ENCODE measurements at regions of chr7 and their contacts with region 1.

Region 1: DNA sequence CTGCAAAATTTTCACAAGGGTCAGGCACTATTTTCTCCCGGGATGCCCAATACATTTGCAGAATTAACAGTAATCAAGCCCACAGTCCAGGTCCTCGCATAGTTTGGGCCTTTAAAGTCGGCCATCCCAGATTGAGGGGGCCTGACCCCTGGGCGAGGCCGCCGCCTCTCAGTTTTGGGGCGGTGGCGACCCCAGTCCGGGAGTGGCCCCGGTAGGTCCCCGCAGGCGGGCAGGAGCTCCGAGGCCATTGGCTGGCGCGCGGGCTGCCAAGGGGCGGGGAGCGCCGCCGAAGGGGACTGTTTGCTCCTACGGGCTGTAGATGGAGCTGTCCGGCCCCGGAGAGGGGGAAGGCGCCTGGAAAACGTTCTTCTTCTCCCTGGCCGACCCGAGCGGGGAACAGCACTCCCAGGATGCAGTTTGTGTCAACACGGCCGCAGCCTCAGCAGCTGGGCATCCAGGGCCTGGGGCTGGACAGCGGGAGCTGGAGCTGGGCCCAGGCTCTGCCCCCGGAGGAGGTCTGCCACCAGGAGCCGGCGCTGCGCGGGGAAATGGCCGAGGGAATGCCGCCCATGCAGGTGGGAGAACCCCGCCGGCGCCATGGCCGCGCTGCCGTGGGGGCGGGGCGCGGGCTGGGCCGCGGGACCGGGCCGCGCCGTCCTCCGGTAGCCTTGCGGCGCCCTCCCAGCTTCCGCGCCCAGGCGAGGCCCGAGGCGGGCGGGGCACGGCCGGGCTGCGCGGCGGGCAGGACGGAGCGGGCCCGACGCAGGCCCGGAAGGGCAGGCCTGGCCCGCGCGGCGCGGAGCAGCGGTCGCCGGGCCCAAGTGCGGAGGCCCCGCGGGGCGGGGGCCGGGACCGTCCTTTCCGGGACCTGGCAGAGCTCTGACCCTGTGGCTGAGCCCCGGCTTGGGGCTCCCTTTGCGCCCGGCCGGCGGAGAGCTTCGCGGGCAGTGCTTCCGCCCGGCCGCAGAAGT is at the start of gene ZNF282:
- DNase-seq: peak; percentile 84
- ATAC-seq: peak; percentile 94
- H3K4me3 Mint-ChIP-seq: peak within 1 kb of the TSS; percentile 92
- H3K27ac Mint-ChIP-seq: peak within 1 kb of the TSS; percentile 92
- H3K4me1 Mint-ChIP-seq: peaks cover 45% of the 10 kb centered on the region
- H3K27me3 Mint-ChIP-seq: no peaks in the 10 kb centered on the region
- CTCF ChIP-seq: peak; percentile 65
- total RNA-seq, gene ZNF282: 29.3 to 29.7 TPM

Region 2: GRCh38 chr7:149147072-149147751 is 48.3 kb before region 1 on chr7 and contains the start of gene ZNF398:
- CTCF ChIA-PET with region 1: interaction called, 15 read pairs
- POLR2A ChIA-PET with region 1: interaction called, 3 read pairs
- intact Hi-C with region 1: no loop called
- DNase-seq: peak; percentile 75
- ATAC-seq: peak; percentile 86
- H3K4me3 Mint-ChIP-seq: peak within 1 kb of the TSS; percentile 97
- H3K27ac Mint-ChIP-seq: peak within 1 kb of the TSS; percentile 95
- H3K4me1 Mint-ChIP-seq: peaks cover 28% of the 10 kb centered on the region
- H3K27me3 Mint-ChIP-seq: no peaks in the 10 kb centered on the region
- CTCF ChIP-seq: peak; percentile 87
- total RNA-seq, gene ZNF398: 7.2 to 8.7 TPM

Region 3: DNA sequence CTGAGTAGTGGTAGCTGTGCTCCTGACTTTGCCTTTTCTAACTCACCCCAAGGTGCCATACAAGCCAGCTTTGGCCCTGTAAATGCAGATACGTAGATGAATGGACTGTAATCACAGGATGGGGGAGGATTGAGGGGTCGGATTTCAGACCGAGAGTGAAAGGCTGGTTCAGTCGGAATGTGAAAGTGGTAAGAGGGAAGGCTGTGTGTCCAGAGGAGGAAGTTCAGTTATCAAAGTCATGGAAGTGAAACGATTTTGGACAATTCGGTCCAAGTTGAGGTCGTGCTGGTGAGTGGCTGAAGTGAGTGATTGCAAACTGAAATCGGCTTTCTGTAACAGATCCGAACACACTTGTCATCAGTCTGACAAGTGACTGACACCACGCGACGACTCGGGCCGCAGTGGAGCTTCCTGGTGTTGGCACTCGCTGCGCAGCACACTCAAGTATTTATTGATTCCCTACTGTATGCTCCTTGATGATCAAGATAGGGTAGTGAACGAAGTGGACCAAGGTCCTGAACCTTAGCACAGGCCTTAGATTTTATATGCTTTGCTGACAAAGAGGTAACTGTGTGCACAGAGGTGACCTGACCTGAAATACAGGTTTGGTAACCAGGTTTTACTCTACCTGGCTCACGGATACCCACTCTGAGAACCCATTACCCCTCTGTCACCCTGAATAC is 10.4 kb after region 1 on chr7:
- CTCF ChIA-PET with region 1: interaction called, 8 read pairs
- POLR2A ChIA-PET with region 1: interaction called, 10 read pairs
- intact Hi-C with region 1: no loop called
- DNase-seq: no peak
- ATAC-seq: no peak
- H3K4me3 Mint-ChIP-seq: no peak overlapping the region
- H3K27ac Mint-ChIP-seq: no peak overlapping the region
- H3K4me1 Mint-ChIP-seq: peaks cover 32% of the 10 kb centered on the region
- H3K27me3 Mint-ChIP-seq: no peaks in the 10 kb centered on the region
- CTCF ChIP-seq: no peak

Region 4: GRCh38 chr7:149284850-149285626 is 89.6 kb after region 1 on chr7:
- CTCF ChIA-PET with region 1: interaction called, 11 read pairs
- POLR2A ChIA-PET with region 1: interaction called, 3 read pairs
- intact Hi-C with region 1: no loop called
- DNase-seq: peak; percentile 98
- ATAC-seq: peak; percentile 98
- H3K4me3 Mint-ChIP-seq: peak overlapping the region; percentile 86
- H3K27ac Mint-ChIP-seq: peak overlapping the region; percentile 80
- H3K4me1 Mint-ChIP-seq: peaks cover 32% of the 10 kb centered on the region
- H3K27me3 Mint-ChIP-seq: no peaks in the 10 kb centered on the region
- CTCF ChIP-seq: no peak

Region 5: DNA sequence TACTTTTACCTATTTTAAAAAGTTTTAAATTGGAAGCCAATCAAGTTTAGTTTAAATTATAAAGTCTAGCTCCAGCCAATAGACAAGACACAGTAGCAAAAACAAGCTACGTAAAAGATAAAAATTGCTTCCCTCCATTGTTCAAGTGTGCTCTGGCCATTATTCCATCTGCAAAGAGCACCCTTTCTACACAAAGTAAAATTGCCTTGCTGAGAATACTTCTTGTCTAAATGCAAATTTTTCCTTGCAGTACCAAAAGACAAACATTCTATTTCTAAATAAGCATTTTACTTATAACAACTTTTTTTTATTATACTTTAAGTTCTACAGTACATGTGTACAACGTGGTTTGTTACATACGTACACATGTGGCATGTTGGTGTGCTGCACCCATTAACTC is 378.1 kb after region 1 on chr7:
- CTCF ChIA-PET with region 1: no interaction called
- POLR2A ChIA-PET with region 1: no interaction called
- intact Hi-C with region 1: no loop called
- DNase-seq: no peak
- ATAC-seq: no peak
- H3K4me3 Mint-ChIP-seq: no peak overlapping the region
- H3K27ac Mint-ChIP-seq: no peak overlapping the region
- H3K4me1 Mint-ChIP-seq: peaks cover 1% of the 10 kb centered on the region
- H3K27me3 Mint-ChIP-seq: no peaks in the 10 kb centered on the region
- CTCF ChIP-seq: no peak

Region 6: DNA sequence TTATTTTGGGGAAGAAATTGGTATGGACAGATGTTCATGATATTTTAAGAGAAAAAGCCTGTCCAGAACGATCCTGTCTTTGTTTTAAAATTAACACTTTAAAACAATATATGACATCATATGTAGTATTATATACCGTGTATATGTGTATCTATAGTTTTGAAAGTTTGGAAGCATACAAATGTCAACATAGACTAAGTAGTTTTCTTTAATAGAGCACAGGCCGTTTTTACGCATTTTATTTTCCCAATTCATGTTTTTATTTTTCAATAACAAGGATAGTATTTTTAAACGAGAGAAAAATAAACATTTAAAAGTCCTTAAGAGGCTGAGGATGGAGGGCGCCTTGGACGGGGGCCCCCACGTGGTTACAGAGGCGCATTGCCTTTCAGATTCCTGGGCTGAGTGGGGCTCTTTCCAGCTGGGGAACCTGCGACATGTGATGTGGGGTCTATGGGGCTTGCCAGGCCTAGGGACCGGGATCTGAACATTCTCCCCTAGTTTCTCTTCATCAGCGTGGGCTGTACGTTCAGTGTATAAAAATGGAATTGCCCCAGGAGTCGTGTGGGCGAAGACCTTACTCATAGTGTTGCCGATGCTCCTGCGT is 430.0 kb after region 1 on chr7:
- CTCF ChIA-PET with region 1: no interaction called
- POLR2A ChIA-PET with region 1: no interaction called
- intact Hi-C with region 1: no loop called
- DNase-seq: peak; percentile 76
- ATAC-seq: no peak
- H3K4me3 Mint-ChIP-seq: peak overlapping the region; percentile 80
- H3K27ac Mint-ChIP-seq: no peak overlapping the region
- H3K4me1 Mint-ChIP-seq: peaks cover 35% of the 10 kb centered on the region
- H3K27me3 Mint-ChIP-seq: peaks cover 8% of the 10 kb centered on the region
- CTCF ChIP-seq: peak; percentile 10

Measured in activated CD8-positive, alpha-beta T cell treated with anti-CD3 and anti-CD28 coated beads for 36 hours (primary cell).